Activated CD4-positive, alpha-beta memory T cell treated with anti-CD3 and anti-CD28 coated beads for 36 hours (primary cell): ENCODE measurements at regions of chr6 and their contacts with region 1.

Region 1: GRCh38 chr6:16319813-16320532 is 81.6 kb downstream of the GMPR start:
- DNase-seq: peak; percentile 81
- H3K4me3 Mint-ChIP-seq: peak overlapping the region; percentile 50
- H3K27ac Mint-ChIP-seq: peak overlapping the region; percentile 84
- H3K4me1 Mint-ChIP-seq: peaks cover 82% of the 10 kb centered on the region
- H3K27me3 Mint-ChIP-seq: no peaks in the 10 kb centered on the region

Region 2: GRCh38 chr6:16205377-16206144 is 114.4 kb before region 1 on chr6:
- CTCF ChIA-PET with region 1: no interaction called
- POLR2A ChIA-PET with region 1: no interaction called
- intact Hi-C with region 1: no loop called
- DNase-seq: no peak
- H3K4me3 Mint-ChIP-seq: no peak overlapping the region
- H3K27ac Mint-ChIP-seq: no peak overlapping the region
- H3K4me1 Mint-ChIP-seq: peaks cover 2% of the 10 kb centered on the region
- H3K27me3 Mint-ChIP-seq: peaks cover 17% of the 10 kb centered on the region

Region 3: DNA sequence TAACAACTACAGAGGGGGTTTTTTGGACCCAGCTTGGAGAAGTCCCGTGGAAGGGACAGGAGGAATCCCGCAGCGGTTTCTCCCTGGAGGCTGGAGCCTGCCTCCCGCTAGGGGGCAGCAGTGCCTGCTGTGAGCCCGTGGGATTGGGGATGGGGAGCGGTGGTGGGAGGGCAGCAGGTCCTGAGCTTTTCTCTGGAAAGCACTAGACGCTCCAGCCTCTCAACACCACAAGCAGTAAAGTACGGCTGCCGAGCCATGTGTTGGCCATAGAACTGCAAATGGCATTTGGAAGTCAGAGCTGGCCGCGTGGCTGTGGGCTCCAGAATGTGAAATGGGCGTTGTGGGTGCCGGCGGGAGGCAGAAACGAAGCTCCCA is 33.8 kb before region 1 on chr6:
- CTCF ChIA-PET with region 1: interaction called, 14 read pairs
- POLR2A ChIA-PET with region 1: no interaction called
- intact Hi-C with region 1: no loop called
- DNase-seq: peak; percentile 49
- H3K4me3 Mint-ChIP-seq: no peak overlapping the region
- H3K27ac Mint-ChIP-seq: no peak overlapping the region
- H3K4me1 Mint-ChIP-seq: no peaks in the 10 kb centered on the region
- H3K27me3 Mint-ChIP-seq: no peaks in the 10 kb centered on the region

Region 4: GRCh38 chr6:16533721-16534136 is 213.8 kb after region 1 on chr6:
- CTCF ChIA-PET with region 1: no interaction called
- POLR2A ChIA-PET with region 1: no interaction called
- intact Hi-C with region 1: loop called (anchors 1 kb)
- DNase-seq: no peak
- H3K4me3 Mint-ChIP-seq: no peak overlapping the region
- H3K27ac Mint-ChIP-seq: peak overlapping the region; percentile 77
- H3K4me1 Mint-ChIP-seq: peaks cover 43% of the 10 kb centered on the region
- H3K27me3 Mint-ChIP-seq: no peaks in the 10 kb centered on the region

Region 5: GRCh38 chr6:16698997-16699868 is 379.3 kb after region 1 on chr6:
- CTCF ChIA-PET with region 1: no interaction called
- POLR2A ChIA-PET with region 1: no interaction called
- intact Hi-C with region 1: loop called (anchors 2 kb)
- DNase-seq: peak; percentile 53
- H3K4me3 Mint-ChIP-seq: peak overlapping the region; percentile 78
- H3K27ac Mint-ChIP-seq: peak overlapping the region; percentile 89
- H3K4me1 Mint-ChIP-seq: peaks cover 75% of the 10 kb centered on the region
- H3K27me3 Mint-ChIP-seq: no peaks in the 10 kb centered on the region

Region 6: GRCh38 chr6:17015144-17015543 is 695.2 kb after region 1 on chr6:
- CTCF ChIA-PET with region 1: no interaction called
- POLR2A ChIA-PET with region 1: no interaction called
- intact Hi-C with region 1: loop called (anchors 5 kb)
- DNase-seq: peak; percentile 44
- H3K4me3 Mint-ChIP-seq: peak overlapping the region; percentile 54
- H3K27ac Mint-ChIP-seq: no peak overlapping the region
- H3K4me1 Mint-ChIP-seq: peaks cover 18% of the 10 kb centered on the region
- H3K27me3 Mint-ChIP-seq: peaks cover 27% of the 10 kb centered on the region